Calu3 (cell line): ENCODE measurements at regions of chr5 and their contacts with region 1.

Region 1: DNA sequence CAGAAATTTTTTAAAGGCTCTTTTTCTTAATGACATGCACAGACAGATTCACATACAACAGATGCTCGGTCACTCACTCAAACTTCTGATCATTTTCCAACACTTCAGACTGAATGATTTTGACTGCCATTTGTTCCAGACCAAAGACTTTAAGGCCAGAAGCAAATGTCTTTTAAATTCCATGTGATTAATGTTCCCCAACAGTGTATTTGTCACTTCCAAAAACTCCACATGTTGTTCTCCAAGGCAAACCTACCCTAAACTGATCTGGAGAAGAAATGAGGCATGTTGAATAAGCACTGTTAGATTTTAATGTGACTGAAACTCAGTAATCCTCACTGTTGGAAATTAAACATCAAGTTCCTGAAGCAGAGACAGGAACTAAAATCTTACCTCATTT is 366.7 kb downstream of the GABRG2 start:
- DNase-seq: no peak
- H3K4me3 Mint-ChIP-seq: no peak overlapping the region
- H3K27ac Mint-ChIP-seq: no peak overlapping the region
- H3K4me1 Mint-ChIP-seq: no peaks in the 10 kb centered on the region
- H3K27me3 Mint-ChIP-seq: no peaks in the 10 kb centered on the region
- CTCF ChIP-seq: no peak

Region 2: GRCh38 chr5:162209005-162209605 is 225.2 kb before region 1 on chr5:
- CTCF ChIA-PET with region 1: no interaction called
- intact Hi-C with region 1: no loop called
- DNase-seq: no peak
- H3K4me3 Mint-ChIP-seq: no peak overlapping the region
- H3K27ac Mint-ChIP-seq: no peak overlapping the region
- H3K4me1 Mint-ChIP-seq: no peaks in the 10 kb centered on the region
- H3K27me3 Mint-ChIP-seq: no peaks in the 10 kb centered on the region
- CTCF ChIP-seq: no peak

Region 3: GRCh38 chr5:162593881-162594280 is 159.6 kb after region 1 on chr5:
- CTCF ChIA-PET with region 1: no interaction called
- intact Hi-C with region 1: no loop called
- DNase-seq: no peak
- H3K4me3 Mint-ChIP-seq: no peak overlapping the region
- H3K27ac Mint-ChIP-seq: no peak overlapping the region
- H3K4me1 Mint-ChIP-seq: no peaks in the 10 kb centered on the region
- H3K27me3 Mint-ChIP-seq: no peaks in the 10 kb centered on the region
- CTCF ChIP-seq: peak; percentile 42

Region 4: GRCh38 chr5:162683280-162683679 is 249.0 kb after region 1 on chr5:
- CTCF ChIA-PET with region 1: no interaction called
- intact Hi-C with region 1: loop called (anchors 10 kb)
- DNase-seq: no peak
- H3K4me3 Mint-ChIP-seq: peak overlapping the region; percentile 11
- H3K27ac Mint-ChIP-seq: peak overlapping the region; percentile 68
- H3K4me1 Mint-ChIP-seq: peaks cover 21% of the 10 kb centered on the region
- H3K27me3 Mint-ChIP-seq: no peaks in the 10 kb centered on the region
- CTCF ChIP-seq: no peak

Region 5: GRCh38 chr5:162719720-162720119 is 285.4 kb after region 1 on chr5:
- CTCF ChIA-PET with region 1: no interaction called
- intact Hi-C with region 1: no loop called
- DNase-seq: no peak
- H3K4me3 Mint-ChIP-seq: no peak overlapping the region
- H3K27ac Mint-ChIP-seq: no peak overlapping the region
- H3K4me1 Mint-ChIP-seq: no peaks in the 10 kb centered on the region
- H3K27me3 Mint-ChIP-seq: no peaks in the 10 kb centered on the region
- CTCF ChIP-seq: no peak